Gastrocnemius medialis (tissue), 4 donors: ENCODE measurements at regions of chr2 and their contacts with region 1.

Region 1: GRCh38 chr2:27086090-27086723 is 365 bp upstream of the KHK start:
- DNase-seq: peak; percentile 88 to 93
- ATAC-seq: peak; percentile 84 to 87
- H3K4me3 ChIP-seq: peak overlapping the region; percentile 70 to 95 (median 86)
- H3K27ac ChIP-seq: peak overlapping the region; percentile 88 to 97 (median 94)
- H3K4me1 ChIP-seq: peaks cover 26 to 41% of the 10 kb centered on the region in 2 donors
- H3K27me3 ChIP-seq: no peaks in the 10 kb centered on the region
- CTCF ChIP-seq: peak; percentile 77 to 99 (median 98)
- POLR2A ChIP-seq: peak; percentile 74 to 89

Region 2: DNA sequence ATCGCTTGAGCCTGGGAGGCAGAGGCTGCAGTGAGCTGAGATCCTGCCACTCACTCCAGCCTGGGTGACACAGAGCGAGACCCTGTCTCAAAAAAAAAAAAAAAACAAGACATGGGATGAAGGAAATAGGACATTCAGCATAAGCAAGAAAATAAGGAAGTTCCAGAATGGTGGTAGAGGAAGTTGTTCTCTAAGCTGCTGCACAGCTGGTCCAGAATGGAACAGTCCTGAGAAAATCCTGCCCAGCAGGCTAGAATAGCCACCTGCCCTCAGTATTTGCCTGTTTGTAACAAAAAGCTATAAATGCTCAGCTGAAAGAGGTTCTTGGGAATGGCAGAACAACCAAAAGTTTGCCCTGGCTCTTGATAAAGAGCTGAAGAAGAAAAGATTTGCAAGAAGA is 126.9 kb before region 1 on chr2:
- in situ Hi-C with region 1: loop called in 2 of 4 experiments (anchors 10 kb)
- intact Hi-C with region 1: loop called (anchors 2 kb)
- DNase-seq: no peak
- ATAC-seq: no peak
- H3K4me3 ChIP-seq: no peak overlapping the region
- H3K27ac ChIP-seq: no peak overlapping the region
- H3K4me1 ChIP-seq: no peaks in the 10 kb centered on the region
- H3K27me3 ChIP-seq: no peaks in the 10 kb centered on the region
- CTCF ChIP-seq: no peak
- POLR2A ChIP-seq: no peak

Region 3: GRCh38 chr2:27032495-27033252 is 53.5 kb before region 1 on chr2 and contains the start of gene TMEM214:
- in situ Hi-C with region 1: loop called in 3 of 4 experiments (anchors 10 kb)
- intact Hi-C with region 1: loop called (anchors 5 kb)
- DNase-seq: peak; percentile 75 to 86
- ATAC-seq: peak; percentile 91
- H3K4me3 ChIP-seq: peak within 1 kb of the TSS; percentile 84 to 97 (median 89)
- H3K27ac ChIP-seq: peak within 1 kb of the TSS; percentile 86 to 93 (median 91)
- H3K4me1 ChIP-seq: peaks cover 14 to 16% of the 10 kb centered on the region in 2 donors
- H3K27me3 ChIP-seq: no peaks in the 10 kb centered on the region
- CTCF ChIP-seq: peak in 3 of 5 experiments; percentile 31 to 37 (median 35)
- POLR2A ChIP-seq: peak; percentile 87 to 90
- total RNA-seq, gene TMEM214: 20.0 to 37.7 (median 24.9) TPM

Region 4: DNA sequence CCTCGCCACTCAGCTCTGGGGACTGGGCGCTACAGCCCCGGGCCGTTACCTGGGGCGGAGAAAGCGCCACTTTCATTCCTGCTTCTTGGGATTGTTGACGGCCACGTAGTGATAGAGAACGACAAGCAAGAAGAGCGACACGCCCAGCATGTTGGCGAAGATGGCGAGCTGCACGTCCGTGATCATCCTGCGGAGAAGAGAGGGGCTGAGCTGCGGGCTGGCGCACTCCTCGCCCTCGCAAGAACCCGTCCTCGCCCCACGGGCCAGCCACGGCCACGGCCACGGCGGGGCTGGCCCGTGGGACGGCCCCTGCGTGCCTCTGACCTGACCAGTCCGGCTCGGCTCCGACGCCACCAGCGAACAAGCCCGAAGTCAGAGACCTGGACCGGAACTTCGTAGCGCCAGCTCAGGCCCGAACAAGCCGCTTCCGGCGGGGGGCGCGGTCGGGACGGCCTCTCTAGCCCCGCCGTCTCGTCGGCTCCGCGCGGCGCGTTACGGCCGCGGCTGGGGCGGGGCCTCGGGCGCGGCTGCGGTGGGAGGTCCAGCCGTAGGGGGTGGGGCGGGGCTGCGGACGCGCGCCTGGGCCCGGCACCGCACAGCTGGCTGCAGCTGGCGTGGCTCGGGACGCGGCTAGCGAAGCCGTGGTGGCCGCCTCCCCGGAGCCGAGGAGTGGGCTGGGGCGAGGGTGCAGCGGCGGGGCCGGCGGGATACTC is 14.8 kb before region 1 on chr2 and contains the start of gene OST4:
- in situ Hi-C with region 1: no loop called
- intact Hi-C with region 1: loop called (anchors 1 kb)
- DNase-seq: peak; percentile 90 to 91
- ATAC-seq: peak; percentile 95
- H3K4me3 ChIP-seq: peak within 1 kb of the TSS; percentile 83 to 98 (median 89)
- H3K27ac ChIP-seq: peak within 1 kb of the TSS; percentile 91 to 97 (median 92)
- H3K4me1 ChIP-seq: peaks cover 29 to 31% of the 10 kb centered on the region in 2 donors
- H3K27me3 ChIP-seq: no peaks in the 10 kb centered on the region
- CTCF ChIP-seq: no peak
- POLR2A ChIP-seq: peak; percentile 79 to 88
- total RNA-seq, gene OST4: 191 to 283 (median 251) TPM

Region 5: GRCh38 chr2:27152102-27152785 is 66.0 kb after region 1 on chr2:
- in situ Hi-C with region 1: no loop called
- intact Hi-C with region 1: no loop called
- DNase-seq: no peak
- ATAC-seq: no peak
- H3K4me3 ChIP-seq: no peak overlapping the region
- H3K27ac ChIP-seq: no peak overlapping the region
- H3K4me1 ChIP-seq: no peaks in the 10 kb centered on the region
- H3K27me3 ChIP-seq: no peaks in the 10 kb centered on the region
- CTCF ChIP-seq: no peak
- POLR2A ChIP-seq: no peak

Region 6: DNA sequence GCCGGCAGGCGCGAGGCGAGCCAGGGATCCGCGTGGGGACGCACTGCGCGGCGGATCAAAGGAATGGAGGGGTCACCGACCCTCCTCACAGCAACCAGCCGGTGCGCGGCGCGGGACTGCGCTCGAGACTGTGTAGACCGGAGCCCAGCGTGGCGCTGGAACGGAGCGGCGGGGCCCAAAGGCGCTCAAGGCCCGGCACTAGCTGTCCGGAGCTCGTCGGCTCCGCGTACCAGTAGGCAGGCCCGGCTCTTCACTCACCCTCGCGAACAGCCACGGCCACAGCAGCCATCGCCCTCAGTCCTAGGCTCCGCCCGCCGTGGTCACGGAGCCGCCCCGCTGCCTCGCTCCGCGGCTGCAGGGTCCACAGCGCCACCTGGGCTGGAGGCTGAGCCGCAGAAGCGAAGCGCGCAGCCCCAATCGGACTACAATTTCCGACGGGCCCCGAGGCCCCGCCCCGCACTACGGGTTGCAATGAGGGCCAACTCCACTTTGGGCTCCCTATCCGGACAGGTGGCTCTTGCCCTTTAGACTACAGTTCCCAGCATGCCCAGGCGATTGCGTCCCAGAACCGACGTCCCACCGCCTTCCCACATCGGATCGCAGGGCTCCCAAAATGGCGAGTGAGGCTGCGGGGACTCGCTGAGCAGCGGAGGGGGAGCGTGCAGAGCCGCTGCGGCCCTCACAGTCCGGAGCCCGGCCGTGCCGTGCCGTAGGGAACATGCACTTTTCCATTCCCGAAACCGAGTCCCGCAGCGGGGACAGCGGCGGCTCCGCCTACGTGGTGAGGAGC is 284.0 kb after region 1 on chr2 and contains the starts of genes EIF2B4 and SNX17:
- in situ Hi-C with region 1: no loop called
- intact Hi-C with region 1: loop called (anchors 10 kb)
- DNase-seq: peak; percentile 99
- ATAC-seq: peak; percentile 92 to 93
- H3K4me3 ChIP-seq: peak within 1 kb of the TSS; percentile 96 to 100 (median 98)
- H3K27ac ChIP-seq: peak within 1 kb of the TSS; percentile 94 to 98 (median 96)
- H3K4me1 ChIP-seq: peaks cover 28 to 35% of the 10 kb centered on the region in 2 donors
- H3K27me3 ChIP-seq: no peaks in the 10 kb centered on the region
- CTCF ChIP-seq: peak; percentile 53 to 81 (median 74)
- POLR2A ChIP-seq: peak; percentile 68 to 81
- total RNA-seq, gene EIF2B4: 50.5 to 57.9 (median 53.8) TPM
- total RNA-seq, gene SNX17: 47.2 to 91.5 (median 56.3) TPM

Region 7: GRCh38 chr2:27723372-27724144 is 637.4 kb after region 1 on chr2:
- in situ Hi-C with region 1: no loop called
- intact Hi-C with region 1: no loop called
- DNase-seq: peak; percentile 35 to 64
- ATAC-seq: peak; percentile 71 to 90
- H3K4me3 ChIP-seq: no peak overlapping the region
- H3K27ac ChIP-seq: peak overlapping the region; percentile 19 to 75 (median 53)
- H3K4me1 ChIP-seq: peaks cover 0 to 8% of the 10 kb centered on the region in 2 donors
- H3K27me3 ChIP-seq: no peaks in the 10 kb centered on the region
- CTCF ChIP-seq: peak; percentile 75 to 88 (median 79)
- POLR2A ChIP-seq: no peak